Mammary epithelial cell (primary cell): ENCODE measurements at regions of chr19 and their contacts with region 1.

Region 1: DNA sequence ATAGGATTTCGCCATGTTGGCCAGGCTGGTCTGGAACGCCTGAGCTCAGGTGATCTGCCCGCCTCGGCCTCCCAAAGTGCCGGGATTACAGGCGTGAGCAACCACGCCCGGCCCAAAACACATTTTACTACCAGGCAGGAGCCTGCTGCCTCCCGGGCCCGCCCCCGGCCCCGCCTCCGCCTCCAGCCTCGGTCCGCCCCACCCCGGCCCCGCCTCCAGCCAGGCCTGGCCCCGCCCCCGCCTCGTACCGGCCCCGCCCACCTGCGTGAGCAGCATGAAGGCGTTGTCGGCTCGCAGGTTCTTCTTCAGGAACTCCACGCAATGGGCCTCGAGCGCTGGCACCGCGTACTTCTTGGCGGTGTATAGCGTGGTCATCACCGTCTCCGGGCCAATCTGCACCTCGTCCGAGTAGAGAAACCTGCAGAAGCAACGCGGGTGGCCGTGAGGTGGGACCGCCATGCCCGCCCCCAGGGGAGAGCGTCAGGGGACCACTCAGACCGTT is 22.7 kb downstream of the BTBD2 start:
- DNase-seq: no peak
- H3K4me3 ChIP-seq: no peak overlapping the region
- H3K27ac ChIP-seq: no peak overlapping the region
- H3K4me1 ChIP-seq: no peaks in the 10 kb centered on the region
- H3K27me3 ChIP-seq: no peaks in the 10 kb centered on the region
- CTCF ChIP-seq: no peak

Region 2: DNA sequence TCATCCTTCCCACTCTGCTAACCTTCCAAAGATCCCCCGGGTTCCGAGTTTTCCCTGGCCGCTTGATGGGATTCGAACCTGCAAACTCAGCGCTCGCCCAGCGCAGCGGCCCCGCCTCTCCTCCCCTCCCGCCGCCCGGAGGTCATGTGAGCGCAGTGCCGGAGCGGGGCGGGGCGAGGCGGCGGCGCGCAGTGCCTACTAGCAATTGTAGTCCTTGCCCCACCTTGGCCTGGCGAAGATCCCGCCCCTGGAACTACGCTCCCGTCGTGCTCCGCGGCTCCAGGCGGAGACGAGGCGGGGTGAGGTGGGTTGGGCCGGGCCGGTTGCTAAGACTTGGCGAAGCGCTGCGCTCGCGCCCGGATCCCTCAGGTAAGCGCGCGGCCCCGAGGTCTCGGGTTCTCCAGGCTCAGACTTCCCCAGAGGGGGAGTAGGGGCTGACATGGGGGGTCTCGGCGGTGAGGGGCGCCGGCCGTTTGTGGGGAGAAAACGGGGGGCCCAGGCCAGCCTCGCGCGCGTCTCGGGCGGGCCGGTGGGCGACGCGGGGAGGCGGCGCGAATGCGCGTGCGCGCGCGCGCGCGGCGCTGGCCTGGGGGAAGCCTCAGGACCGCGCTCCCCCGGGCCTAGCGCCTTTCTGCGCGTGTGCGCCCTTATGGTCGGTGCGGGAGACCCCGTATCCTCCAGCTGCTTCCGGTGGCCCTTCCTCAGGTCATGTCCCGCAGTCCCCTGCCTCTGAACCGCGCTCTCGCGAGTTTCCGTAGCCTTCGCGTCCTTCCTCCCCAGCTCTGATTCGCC is 87.5 kb before region 1 on chr19 and contains the starts of genes ADAT3 and SCAMP4:
- CTCF ChIA-PET with region 1: no interaction called
- dilution Hi-C with region 1: no loop called
- in situ Hi-C with region 1: no loop called
- intact Hi-C with region 1: no loop called
- DNase-seq: peak; percentile 99
- H3K4me3 ChIP-seq: peak within 1 kb of the TSS; percentile 57 to 80 (median 62)
- H3K27ac ChIP-seq: peak within 1 kb of the TSS; percentile 41
- H3K4me1 ChIP-seq: peaks cover 38% of the 10 kb centered on the region
- H3K27me3 ChIP-seq: no peaks in the 10 kb centered on the region
- CTCF ChIP-seq: no peak
- total RNA-seq, gene ADAT3: 3.5 to 7.3 TPM
- total RNA-seq, gene SCAMP4: 70.2 to 76.5 TPM

Region 3: GRCh38 chr19:1935484-1936208 is 57.2 kb before region 1 on chr19:
- CTCF ChIA-PET with region 1: no interaction called
- dilution Hi-C with region 1: loop called (anchors 5 kb)
- in situ Hi-C with region 1: no loop called
- intact Hi-C with region 1: no loop called
- DNase-seq: peak; percentile 24
- H3K4me3 ChIP-seq: no peak overlapping the region
- H3K27ac ChIP-seq: no peak overlapping the region
- H3K4me1 ChIP-seq: peaks cover 10% of the 10 kb centered on the region
- H3K27me3 ChIP-seq: no peaks in the 10 kb centered on the region
- CTCF ChIP-seq: no peak

Region 4: GRCh38 chr19:2032296-2032941 is 39.6 kb after region 1 on chr19:
- CTCF ChIA-PET with region 1: no interaction called
- dilution Hi-C with region 1: loop called (anchors 5 kb)
- in situ Hi-C with region 1: no loop called
- intact Hi-C with region 1: no loop called
- DNase-seq: peak; percentile 95
- H3K4me3 ChIP-seq: peak overlapping the region in 2 of 3 experiments; percentile 19 to 39
- H3K27ac ChIP-seq: peak overlapping the region; percentile 80
- H3K4me1 ChIP-seq: peaks cover 31% of the 10 kb centered on the region
- H3K27me3 ChIP-seq: no peaks in the 10 kb centered on the region
- CTCF ChIP-seq: no peak

Region 5: DNA sequence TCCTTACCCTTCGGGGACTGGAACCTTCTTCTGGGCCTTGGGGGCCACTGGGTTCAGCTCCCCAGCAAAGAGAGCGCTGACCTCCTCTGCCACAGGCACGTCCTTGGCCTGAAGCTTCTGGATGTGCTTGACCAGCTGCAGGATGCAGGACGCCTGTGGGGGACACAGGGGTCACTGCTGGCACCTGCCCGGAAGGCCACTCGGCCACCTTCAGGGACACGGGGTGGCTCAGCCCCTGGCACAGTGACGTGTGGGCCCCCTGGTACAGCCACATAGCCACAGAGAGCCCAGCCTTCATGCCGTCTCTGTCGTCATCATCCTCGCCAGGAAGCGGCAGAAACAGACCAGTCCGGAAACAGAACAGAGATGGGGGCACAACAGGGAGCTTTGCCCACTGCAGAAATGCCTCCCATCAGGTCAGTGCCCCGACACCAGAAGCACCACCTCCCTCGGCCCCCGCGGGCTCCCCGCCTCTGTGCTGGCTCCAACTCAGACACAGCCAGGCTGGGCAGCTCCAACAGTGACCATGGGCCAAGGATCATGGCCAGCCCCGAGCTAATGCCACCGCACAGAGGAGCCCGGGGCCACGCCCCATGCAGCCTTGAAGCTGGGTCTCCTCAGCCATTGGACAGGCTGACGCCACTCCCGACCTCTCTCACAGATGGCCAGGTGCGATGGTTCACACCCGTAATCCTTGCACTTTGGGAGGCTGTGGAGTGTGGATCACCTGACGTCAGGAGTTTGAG is 124.6 kb after region 1 on chr19:
- CTCF ChIA-PET with region 1: no interaction called
- dilution Hi-C with region 1: loop called (anchors 5 kb)
- in situ Hi-C with region 1: no loop called
- intact Hi-C with region 1: no loop called
- DNase-seq: no peak
- H3K4me3 ChIP-seq: no peak overlapping the region
- H3K27ac ChIP-seq: no peak overlapping the region
- H3K4me1 ChIP-seq: peaks cover 18% of the 10 kb centered on the region
- H3K27me3 ChIP-seq: no peaks in the 10 kb centered on the region
- CTCF ChIP-seq: no peak

Region 6: DNA sequence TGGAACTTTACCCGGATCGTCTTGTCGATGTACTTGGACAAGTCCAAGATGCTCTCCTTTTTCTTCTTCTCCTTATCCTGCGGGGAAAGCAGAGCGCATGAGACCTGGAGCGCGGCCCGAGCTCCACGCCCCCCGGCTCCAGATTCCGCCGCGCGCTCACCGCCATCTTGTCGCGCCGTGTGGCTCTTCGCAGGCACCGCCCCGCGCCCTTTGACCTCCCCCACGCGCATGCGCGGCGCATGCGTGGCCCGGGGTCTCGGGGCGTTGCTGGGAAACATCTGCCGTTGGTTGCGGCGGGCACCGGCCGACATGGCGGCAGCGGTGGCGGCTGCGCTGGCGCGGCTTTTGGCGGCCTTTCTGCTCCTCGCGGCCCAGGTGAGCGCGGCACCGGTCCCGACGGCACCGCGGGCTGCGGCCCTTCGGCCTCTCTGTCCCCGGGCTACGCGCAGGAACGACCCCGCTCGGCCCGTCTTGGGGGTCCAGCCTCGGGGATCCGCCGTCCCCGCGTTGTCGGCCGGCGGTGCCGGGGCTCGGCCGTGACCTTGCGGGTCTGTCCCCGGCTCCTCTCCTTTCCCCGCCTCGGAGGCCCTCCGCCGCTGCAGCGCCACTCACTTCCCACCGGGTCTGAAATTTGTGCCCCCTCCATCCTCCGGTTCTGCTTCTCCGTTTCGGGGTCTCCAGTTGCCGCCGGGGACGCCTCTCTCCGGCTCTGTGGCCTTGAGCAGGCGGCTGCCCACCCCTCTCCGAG is 335.8 kb after region 1 on chr19 and contains the starts of genes LSM7 and SPPL2B:
- CTCF ChIA-PET with region 1: no interaction called
- dilution Hi-C with region 1: loop called (anchors 5 kb)
- in situ Hi-C with region 1: no loop called
- intact Hi-C with region 1: no loop called
- DNase-seq: peak; percentile 83
- H3K4me3 ChIP-seq: peak within 1 kb of the TSS; percentile 69 to 81 (median 81)
- H3K27ac ChIP-seq: peak within 1 kb of the TSS; percentile 79
- H3K4me1 ChIP-seq: peaks cover 13% of the 10 kb centered on the region
- H3K27me3 ChIP-seq: no peaks in the 10 kb centered on the region
- CTCF ChIP-seq: no peak
- total RNA-seq, gene LSM7: 67.7 to 91.6 TPM
- total RNA-seq, gene SPPL2B: 21.8 to 50.7 TPM

Region 7: DNA sequence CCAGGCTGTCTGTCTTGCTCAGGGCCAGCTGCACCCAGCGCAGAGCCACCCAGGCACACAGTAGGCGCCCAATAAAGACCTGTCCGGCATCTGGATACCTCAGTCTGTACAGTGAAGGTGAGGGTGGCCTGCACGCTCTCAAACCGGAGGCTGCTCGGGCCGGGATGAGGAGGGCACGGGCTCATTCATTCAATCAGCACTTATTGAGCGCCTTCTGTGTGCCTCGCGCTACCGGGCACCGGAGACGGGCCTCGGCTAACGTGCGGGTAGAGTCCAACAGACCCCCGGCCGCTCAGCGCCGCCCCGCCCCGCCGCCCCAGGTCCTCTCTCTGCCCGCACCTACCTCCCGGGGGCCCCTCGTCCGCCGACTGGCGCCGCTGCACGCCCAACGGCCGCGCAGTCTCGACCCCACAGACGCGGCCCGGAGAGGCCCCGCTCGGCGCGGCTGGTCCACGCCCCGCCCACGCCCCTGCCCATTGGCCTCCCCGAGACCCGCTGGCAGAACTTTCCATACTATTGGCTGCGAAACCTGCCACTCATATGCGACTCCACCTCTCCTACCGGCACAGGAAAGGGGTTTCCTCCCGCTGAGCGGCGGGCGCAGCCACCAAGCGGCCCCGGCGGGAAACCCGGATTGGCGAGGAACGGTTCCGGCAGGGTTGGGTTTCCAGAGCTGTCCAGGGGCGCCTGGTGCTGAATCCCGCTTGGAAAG is 746.9 kb after region 1 on chr19 and contains the start of gene SLC39A3:
- CTCF ChIA-PET with region 1: no interaction called
- dilution Hi-C with region 1: loop called (anchors 10 kb)
- in situ Hi-C with region 1: no loop called
- intact Hi-C with region 1: no loop called
- DNase-seq: peak; percentile 96
- H3K4me3 ChIP-seq: peak within 1 kb of the TSS; percentile 88 to 92 (median 92)
- H3K27ac ChIP-seq: no peak within 1 kb of the TSS
- H3K4me1 ChIP-seq: no peaks in the 10 kb centered on the region
- H3K27me3 ChIP-seq: no peaks in the 10 kb centered on the region
- CTCF ChIP-seq: peak in 1 of 2 donors; percentile 26
- total RNA-seq, gene SLC39A3: 32.6 to 34.7 TPM